ENCODE measurements at regions of chr5 and their contacts with region 1.

Region 1: GRCh38 chr5:66306105-66306843 is 162.2 kb downstream of the SREK1 start:
- DNase-seq: peak in 6 of 9 donors; percentile 10 to 31 (median 21)
- ATAC-seq: peak; percentile 75
- H3K4me3 ChIP-seq: no peak overlapping the region
- H3K4me3 Mint-ChIP-seq: no peak overlapping the region
- H3K27ac ChIP-seq: no peak overlapping the region
- H3K27ac Mint-ChIP-seq: peak overlapping the region in 1 of 9 donors; percentile 36
- H3K4me1 ChIP-seq: no peaks in the 10 kb centered on the region
- H3K4me1 Mint-ChIP-seq: peaks cover 0 to 6% (median 3%) of the 10 kb centered on the region in 7 donors
- H3K27me3 ChIP-seq: no peaks in the 10 kb centered on the region
- H3K27me3 Mint-ChIP-seq: peaks cover 0 to 22% (median 13%) of the 10 kb centered on the region in 5 donors

Region 2: GRCh38 chr5:65760504-65761275 is 545.6 kb before region 1 on chr5:
- CTCF ChIA-PET with region 1: interaction called, 4 read pairs
- POLR2A ChIA-PET with region 1: no interaction called
- intact Hi-C with region 1: loop called (anchors 1 to 2 kb)
- DNase-seq: peak in 7 of 9 donors; percentile 53 to 81 (median 67)
- ATAC-seq: peak; percentile 95
- H3K4me3 ChIP-seq: no peak overlapping the region
- H3K4me3 Mint-ChIP-seq: peak overlapping the region in 3 of 10 donors; percentile 2 to 24 (median 4)
- H3K27ac ChIP-seq: no peak overlapping the region
- H3K27ac Mint-ChIP-seq: peak overlapping the region in 3 of 9 donors; percentile 0 to 68 (median 23)
- H3K4me1 ChIP-seq: peaks cover 0 to 4% of the 10 kb centered on the region in 2 donors
- H3K4me1 Mint-ChIP-seq: peaks cover 3 to 10% (median 6%) of the 10 kb centered on the region in 7 donors
- H3K27me3 ChIP-seq: no peaks in the 10 kb centered on the region
- H3K27me3 Mint-ChIP-seq: no peaks in the 10 kb centered on the region

Region 3: GRCh38 chr5:66713998-66714397 is 407.7 kb after region 1 on chr5:
- CTCF ChIA-PET with region 1: no interaction called
- POLR2A ChIA-PET with region 1: no interaction called
- intact Hi-C with region 1: no loop called
- DNase-seq: no peak
- ATAC-seq: no peak
- H3K4me3 ChIP-seq: no peak overlapping the region
- H3K4me3 Mint-ChIP-seq: no peak overlapping the region
- H3K27ac ChIP-seq: no peak overlapping the region
- H3K27ac Mint-ChIP-seq: no peak overlapping the region
- H3K4me1 ChIP-seq: no peaks in the 10 kb centered on the region
- H3K4me1 Mint-ChIP-seq: no peaks in the 10 kb centered on the region
- H3K27me3 ChIP-seq: no peaks in the 10 kb centered on the region
- H3K27me3 Mint-ChIP-seq: peaks cover 5 to 12% (median 10%) of the 10 kb centered on the region in 5 donors

Region 4: GRCh38 chr5:66757188-66757833 is 451.0 kb after region 1 on chr5:
- CTCF ChIA-PET with region 1: interaction called, 4 read pairs
- POLR2A ChIA-PET with region 1: no interaction called
- intact Hi-C with region 1: loop called (anchors 1 kb)
- DNase-seq: peak in 4 of 9 donors; percentile 5 to 37 (median 22)
- ATAC-seq: peak; percentile 54
- H3K4me3 ChIP-seq: no peak overlapping the region
- H3K4me3 Mint-ChIP-seq: no peak overlapping the region
- H3K27ac ChIP-seq: no peak overlapping the region
- H3K27ac Mint-ChIP-seq: no peak overlapping the region
- H3K4me1 ChIP-seq: no peaks in the 10 kb centered on the region
- H3K4me1 Mint-ChIP-seq: no peaks in the 10 kb centered on the region
- H3K27me3 ChIP-seq: no peaks in the 10 kb centered on the region
- H3K27me3 Mint-ChIP-seq: peaks cover 9 to 46% (median 15%) of the 10 kb centered on the region in 5 donors

Region 5: GRCh38 chr5:66864331-66864840 is 558.1 kb after region 1 on chr5:
- CTCF ChIA-PET with region 1: no interaction called
- POLR2A ChIA-PET with region 1: no interaction called
- intact Hi-C with region 1: loop called in 1 of 2 experiments (anchors 1 kb)
- DNase-seq: peak in 1 of 9 donors; percentile 12
- ATAC-seq: peak; percentile 32
- H3K4me3 ChIP-seq: no peak overlapping the region
- H3K4me3 Mint-ChIP-seq: no peak overlapping the region
- H3K27ac ChIP-seq: no peak overlapping the region
- H3K27ac Mint-ChIP-seq: peak overlapping the region in 1 of 9 donors; percentile 1
- H3K4me1 ChIP-seq: no peaks in the 10 kb centered on the region
- H3K4me1 Mint-ChIP-seq: peaks cover 0 to 50% (median 0%) of the 10 kb centered on the region in 7 donors
- H3K27me3 ChIP-seq: no peaks in the 10 kb centered on the region
- H3K27me3 Mint-ChIP-seq: peaks cover 4 to 48% (median 26%) of the 10 kb centered on the region in 5 donors

Region 6: DNA sequence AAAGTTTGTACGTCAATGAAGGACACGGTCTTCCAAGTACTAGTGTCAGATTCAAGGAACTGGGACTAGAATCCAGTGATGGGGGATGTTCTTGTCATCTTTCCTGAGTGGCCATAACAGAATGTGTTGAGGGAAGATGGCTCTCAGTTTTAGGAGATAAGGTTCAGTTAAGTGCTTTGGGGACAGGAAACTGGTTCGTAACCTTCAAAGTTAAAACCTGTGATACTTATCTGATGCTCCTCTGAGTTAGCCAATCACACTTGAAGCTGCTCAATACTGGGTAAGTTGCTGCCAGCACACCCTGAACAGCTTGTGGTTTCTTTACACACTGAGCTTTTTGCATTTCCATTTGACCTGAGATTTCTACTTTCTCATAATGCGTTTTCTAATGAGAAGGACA is 1973.7 kb after region 1 on chr5:
- CTCF ChIA-PET with region 1: no interaction called
- POLR2A ChIA-PET with region 1: no interaction called
- intact Hi-C with region 1: loop called in 1 of 2 experiments (anchors 5 kb)
- DNase-seq: peak in 8 of 9 donors; percentile 32 to 84 (median 80)
- ATAC-seq: peak; percentile 94
- H3K4me3 ChIP-seq: peak overlapping the region; percentile 63
- H3K4me3 Mint-ChIP-seq: peak overlapping the region; percentile 84 to 95 (median 90)
- H3K27ac ChIP-seq: peak overlapping the region; percentile 70
- H3K27ac Mint-ChIP-seq: peak overlapping the region; percentile 94 to 98 (median 97)
- H3K4me1 ChIP-seq: peaks cover 59 to 65% of the 10 kb centered on the region in 2 donors
- H3K4me1 Mint-ChIP-seq: peaks cover 39 to 94% (median 81%) of the 10 kb centered on the region in 7 donors
- H3K27me3 ChIP-seq: no peaks in the 10 kb centered on the region
- H3K27me3 Mint-ChIP-seq: no peaks in the 10 kb centered on the region